IMR-90 (cell line): ENCODE measurements at regions of chr5 and their contacts with region 1.

Region 1: DNA sequence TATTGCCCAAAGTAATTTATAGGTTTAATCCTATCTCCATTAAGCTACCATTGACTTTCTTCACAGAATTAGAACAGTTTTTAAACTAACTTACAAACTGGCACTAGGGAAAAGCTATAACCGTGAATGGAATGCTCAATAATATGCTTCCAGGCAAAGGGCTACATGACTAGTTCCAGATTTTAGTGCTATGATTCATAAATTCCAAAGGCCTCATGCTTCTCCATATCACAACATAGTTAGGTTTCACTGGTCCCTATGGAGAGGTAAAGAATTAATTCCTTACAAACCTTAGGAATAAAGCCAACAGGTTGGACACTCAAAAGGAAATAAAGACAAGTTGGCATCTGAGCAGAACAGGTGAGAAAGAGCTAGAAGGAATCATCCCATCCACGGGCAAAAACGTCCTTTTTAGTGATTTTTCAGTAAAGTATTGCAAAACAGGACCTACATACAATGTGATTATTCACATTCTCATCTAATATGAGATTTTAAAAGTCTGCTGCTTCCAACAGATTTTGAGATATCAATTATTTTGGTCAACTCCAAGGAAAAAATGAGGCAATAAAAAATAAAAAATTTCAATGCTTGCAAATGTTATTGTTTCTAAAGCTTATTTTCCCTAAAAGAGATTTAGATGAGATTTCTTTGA is 97.0 kb upstream of the TARS1 start:
- DNase-seq: peak; percentile 88
- ATAC-seq: peak; percentile 98
- H3K4me3 ChIP-seq: no peak overlapping the region
- H3K27ac ChIP-seq: peak overlapping the region; percentile 11; the same call in 1 of the 2 replicates
- H3K4me1 ChIP-seq: no peaks in the 10 kb centered on the region; the same call in 1 of the 2 replicates
- H3K27me3 ChIP-seq: no peaks in the 10 kb centered on the region
- CTCF ChIP-seq: no peak
- POLR2A ChIP-seq: no peak
- RAD21 ChIP-seq: no peak

Region 2: GRCh38 chr5:33321026-33321425 is 22.8 kb before region 1 on chr5:
- CTCF ChIA-PET with region 1: no interaction called
- POLR2A ChIA-PET with region 1: no interaction called
- dilution Hi-C with region 1: no loop called
- in situ Hi-C with region 1: no loop called
- intact Hi-C with region 1: loop called (anchors 1 kb)
- DNase-seq: peak; percentile 98
- ATAC-seq: peak; percentile 82
- H3K4me3 ChIP-seq: no peak overlapping the region
- H3K27ac ChIP-seq: peak overlapping the region; percentile 56; the same call in 1 of the 2 replicates
- H3K4me1 ChIP-seq: peaks cover 9% of the 10 kb centered on the region
- H3K27me3 ChIP-seq: no peaks in the 10 kb centered on the region
- CTCF ChIP-seq: no peak
- POLR2A ChIP-seq: no peak
- RAD21 ChIP-seq: no peak

Region 3: DNA sequence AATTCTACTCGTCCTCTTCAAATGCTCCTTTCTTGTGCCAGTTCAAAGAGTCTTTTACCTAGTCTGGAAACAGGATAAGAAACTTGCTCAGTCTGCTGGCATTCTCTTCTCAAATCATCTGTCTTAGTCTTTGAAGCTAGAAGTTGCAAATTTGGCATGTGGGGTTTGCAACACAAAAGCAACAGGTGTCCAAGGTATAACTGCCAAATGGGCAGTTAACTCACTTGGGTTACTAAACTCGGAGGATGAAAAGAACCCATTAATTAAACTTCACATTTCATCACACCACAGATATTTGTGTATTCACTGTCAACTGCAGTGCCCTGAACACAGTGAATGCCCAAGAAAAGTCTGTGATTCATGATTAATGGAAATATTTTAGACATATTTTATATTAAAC is 11.0 kb before region 1 on chr5:
- CTCF ChIA-PET with region 1: no interaction called
- POLR2A ChIA-PET with region 1: no interaction called
- dilution Hi-C with region 1: no loop called
- in situ Hi-C with region 1: no loop called
- intact Hi-C with region 1: no loop called
- DNase-seq: no peak
- ATAC-seq: no peak
- H3K4me3 ChIP-seq: no peak overlapping the region
- H3K27ac ChIP-seq: no peak overlapping the region
- H3K4me1 ChIP-seq: peaks cover 6% of the 10 kb centered on the region
- H3K27me3 ChIP-seq: no peaks in the 10 kb centered on the region
- CTCF ChIP-seq: no peak
- POLR2A ChIP-seq: no peak
- RAD21 ChIP-seq: no peak